GM13976 (cell line): ENCODE measurements at regions of chr2 and their contacts with region 1.

Region 1: GRCh38 chr2:44981136-44982108 is 27.8 kb downstream of the SIX2 start:
- DNase-seq: peak; percentile 78
- CTCF ChIP-seq: peak; percentile 84

Region 2: DNA sequence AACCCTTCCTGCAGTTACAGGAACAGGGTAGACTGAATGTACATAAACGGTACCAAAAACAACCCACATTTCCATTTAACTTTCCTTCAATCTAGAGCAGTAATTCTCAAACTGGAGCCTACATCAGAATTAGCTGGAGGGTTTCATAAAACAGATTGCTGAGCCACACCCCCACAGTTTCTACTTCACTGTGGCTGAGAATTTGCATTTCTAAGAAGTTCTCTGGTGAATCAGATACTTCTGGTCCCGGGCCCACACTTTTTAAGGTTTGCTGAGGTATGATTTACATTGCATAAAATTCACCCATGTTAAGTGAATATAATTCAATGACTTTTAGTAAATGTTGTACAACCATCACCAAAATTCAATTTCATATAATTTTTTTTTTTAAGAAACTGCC is 515.9 kb after region 1 on chr2:
- in situ Hi-C with region 1: loop called (anchors 5 kb)
- DNase-seq: peak; percentile 46
- CTCF ChIP-seq: no peak

Region 3: DNA sequence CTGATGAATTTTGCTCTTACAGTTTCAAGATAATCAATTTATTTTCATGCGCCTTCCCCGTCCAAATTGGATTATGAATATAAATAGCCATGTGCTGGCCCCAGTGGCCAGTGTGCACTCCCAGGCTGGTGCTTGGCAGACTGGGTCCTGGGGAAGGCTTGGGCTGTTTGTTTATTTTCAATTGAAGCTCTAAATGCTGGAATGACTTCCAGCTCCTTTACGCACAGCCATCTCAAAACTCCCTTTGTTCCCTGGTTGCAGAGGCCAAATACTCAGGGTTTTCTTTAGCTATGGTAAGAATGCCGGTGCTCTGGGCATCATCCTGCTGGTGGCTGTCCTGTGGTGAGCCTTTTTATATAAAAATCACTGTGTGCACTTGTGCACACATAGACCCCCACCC is 801.6 kb after region 1 on chr2:
- in situ Hi-C with region 1: no loop called
- DNase-seq: no peak
- CTCF ChIP-seq: no peak